ENCODE measurements at regions of chr3 and their contacts with region 1.

Region 1: GRCh38 chr3:177810162-177810623 is 612.9 kb upstream of the TBL1XR1 start:
- DNase-seq: no peak
- H3K4me3 Mint-ChIP-seq: no peak overlapping the region
- H3K27ac Mint-ChIP-seq: no peak overlapping the region
- H3K4me1 Mint-ChIP-seq: peaks cover 28% of the 10 kb centered on the region
- H3K27me3 Mint-ChIP-seq: no peaks in the 10 kb centered on the region

Region 2: GRCh38 chr3:177820683-177821316 is 10.6 kb after region 1 on chr3:
- CTCF ChIA-PET with region 1: interaction called, 3 read pairs
- intact Hi-C with region 1: loop called (anchors 1 kb)
- DNase-seq: peak; percentile 19
- H3K4me3 Mint-ChIP-seq: no peak overlapping the region
- H3K27ac Mint-ChIP-seq: peak overlapping the region; percentile 44
- H3K4me1 Mint-ChIP-seq: peaks cover 19% of the 10 kb centered on the region
- H3K27me3 Mint-ChIP-seq: no peaks in the 10 kb centered on the region

Region 3: GRCh38 chr3:177883957-177884356 is 73.8 kb after region 1 on chr3:
- CTCF ChIA-PET with region 1: no interaction called
- intact Hi-C with region 1: loop called (anchors 5 kb)
- DNase-seq: no peak
- H3K4me3 Mint-ChIP-seq: no peak overlapping the region
- H3K27ac Mint-ChIP-seq: no peak overlapping the region
- H3K4me1 Mint-ChIP-seq: peaks cover 18% of the 10 kb centered on the region
- H3K27me3 Mint-ChIP-seq: no peaks in the 10 kb centered on the region